WTC11 (cell line): ENCODE measurements at regions of chr10 and their contacts with region 1.

Region 1: GRCh38 chr10:23136462-23136861 is 41.1 kb downstream of the MSRB2 start:
- DNase-seq: no peak
- ATAC-seq: no peak
- H3K4me3 Mint-ChIP-seq: no peak overlapping the region
- H3K27ac Mint-ChIP-seq: no peak overlapping the region
- H3K4me1 Mint-ChIP-seq: no peaks in the 10 kb centered on the region
- H3K27me3 Mint-ChIP-seq: no peaks in the 10 kb centered on the region; the same call in 1 of the 2 replicates
- CTCF ChIP-seq: no peak

Region 2: DNA sequence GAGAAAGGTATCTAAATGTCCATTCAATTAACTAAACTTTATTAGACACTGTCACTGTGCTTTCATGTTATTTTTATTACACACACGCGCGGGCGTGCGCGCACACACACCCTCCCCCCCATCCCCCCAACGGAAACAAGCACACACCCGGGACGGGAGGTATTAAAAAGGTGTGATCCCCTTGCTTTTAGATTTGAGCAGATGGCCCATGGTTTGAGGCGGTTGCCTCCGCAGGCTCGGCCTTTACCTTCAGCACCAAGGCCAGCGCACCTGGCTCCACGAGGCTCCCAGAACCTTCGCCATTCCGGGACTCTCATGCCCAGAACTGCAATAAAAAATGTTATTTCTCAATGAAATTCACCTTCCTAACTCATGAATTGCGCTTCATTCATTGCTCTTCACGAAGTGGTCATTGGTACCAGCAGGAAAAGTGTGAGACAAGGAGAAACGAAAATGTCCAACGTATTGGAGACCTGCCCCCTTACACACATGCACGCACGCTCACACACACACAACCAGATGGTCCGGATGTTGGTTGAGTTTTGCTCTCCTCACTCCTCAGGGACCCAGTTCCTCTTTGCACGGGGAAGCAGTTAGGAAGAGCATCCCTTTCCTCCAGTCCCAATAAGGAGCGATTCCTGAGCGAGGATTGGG is 34.9 kb after region 1 on chr10:
- CTCF ChIA-PET with region 1: no interaction called
- POLR2A ChIA-PET with region 1: no interaction called
- DNase-seq: peak; percentile 75
- ATAC-seq: no peak
- H3K4me3 Mint-ChIP-seq: peak overlapping the region; percentile 70; the same call in 1 of the 2 replicates
- H3K27ac Mint-ChIP-seq: no peak overlapping the region
- H3K4me1 Mint-ChIP-seq: peaks cover 16% of the 10 kb centered on the region
- H3K27me3 Mint-ChIP-seq: peaks cover 96% of the 10 kb centered on the region
- CTCF ChIP-seq: no peak

Region 3: DNA sequence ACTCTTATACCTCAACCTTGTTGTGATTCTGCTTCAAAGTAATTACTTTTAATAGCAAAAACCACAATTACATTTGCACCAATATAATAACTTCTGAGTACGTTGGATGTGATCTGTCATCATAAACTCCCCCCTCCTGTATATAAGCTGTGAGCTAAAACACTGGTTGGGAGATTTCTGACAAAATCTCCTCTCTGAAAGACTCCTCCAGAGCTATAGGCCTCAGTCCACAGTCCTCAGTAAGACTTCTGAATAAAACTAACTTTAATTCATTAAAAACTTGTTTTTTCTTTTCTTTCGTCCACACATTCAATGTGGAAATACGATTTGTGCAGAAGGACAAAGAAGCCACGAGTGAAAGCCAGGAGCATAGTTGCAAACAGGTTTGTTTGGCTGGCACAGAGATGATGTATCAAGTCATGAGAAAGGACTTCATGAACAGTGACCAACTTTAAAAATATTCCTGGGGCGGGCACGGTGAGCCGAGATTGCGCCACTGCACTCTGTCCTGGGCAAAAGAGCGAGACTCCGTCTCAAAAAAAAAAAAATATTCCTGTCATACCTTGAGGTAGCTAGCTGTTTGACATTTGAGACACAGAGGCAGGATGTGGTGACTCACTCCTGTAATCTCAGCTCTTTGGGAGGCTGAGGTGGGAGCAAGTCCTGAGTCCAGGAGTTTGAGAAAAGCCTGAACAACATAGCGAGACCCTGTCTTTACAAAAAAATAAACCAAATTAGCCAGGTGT is 1678.3 kb after region 1 on chr10:
- CTCF ChIA-PET with region 1: no interaction called
- POLR2A ChIA-PET with region 1: interaction called, 13 read pairs
- DNase-seq: no peak
- ATAC-seq: no peak
- H3K4me3 Mint-ChIP-seq: no peak overlapping the region
- H3K27ac Mint-ChIP-seq: no peak overlapping the region
- H3K4me1 Mint-ChIP-seq: peaks cover 10% of the 10 kb centered on the region
- H3K27me3 Mint-ChIP-seq: no peaks in the 10 kb centered on the region
- CTCF ChIP-seq: no peak